ENCODE measurements at regions of chr17 and their contacts with region 1.

Region 1: GRCh38 chr17:50200457-50201275 is 765 bp downstream of the COL1A1 start:
- DNase-seq: peak; percentile 50 to 96 (median 78)

Region 2: DNA sequence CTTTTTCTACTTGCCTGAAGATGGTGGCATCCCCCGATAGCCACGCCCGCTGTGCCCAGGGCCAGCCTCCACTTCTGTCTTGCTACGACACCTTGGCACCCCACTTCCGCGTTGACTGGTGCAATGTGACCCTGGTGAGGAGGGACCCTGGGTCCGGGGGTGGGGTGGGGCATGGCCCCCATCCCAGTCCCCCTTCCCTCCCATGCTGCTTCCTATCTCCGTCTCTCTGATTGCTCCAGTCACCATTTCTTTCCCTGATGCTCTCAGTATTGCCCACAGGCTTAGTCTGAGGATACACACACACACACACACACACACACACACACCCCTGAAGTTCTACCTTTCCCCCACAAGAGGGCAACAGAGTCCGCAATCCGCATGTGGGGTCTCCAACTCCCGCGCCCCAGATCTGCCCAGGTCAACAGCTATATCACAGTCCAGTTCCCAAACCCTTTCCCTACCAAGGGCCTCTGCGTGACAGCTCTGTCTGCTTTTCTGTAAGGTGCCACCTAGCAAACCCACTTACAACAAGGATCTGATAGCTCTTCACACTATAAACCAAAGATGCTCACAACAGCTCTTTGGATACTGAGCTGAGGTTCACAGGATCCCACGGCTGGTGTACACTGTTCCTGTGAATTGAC is 31.4 kb before region 1 on chr17:
- intact Hi-C with region 1: loop called (anchors 2 kb)
- DNase-seq: peak in 2 of 10 donors; percentile 54 to 59

Region 3: DNA sequence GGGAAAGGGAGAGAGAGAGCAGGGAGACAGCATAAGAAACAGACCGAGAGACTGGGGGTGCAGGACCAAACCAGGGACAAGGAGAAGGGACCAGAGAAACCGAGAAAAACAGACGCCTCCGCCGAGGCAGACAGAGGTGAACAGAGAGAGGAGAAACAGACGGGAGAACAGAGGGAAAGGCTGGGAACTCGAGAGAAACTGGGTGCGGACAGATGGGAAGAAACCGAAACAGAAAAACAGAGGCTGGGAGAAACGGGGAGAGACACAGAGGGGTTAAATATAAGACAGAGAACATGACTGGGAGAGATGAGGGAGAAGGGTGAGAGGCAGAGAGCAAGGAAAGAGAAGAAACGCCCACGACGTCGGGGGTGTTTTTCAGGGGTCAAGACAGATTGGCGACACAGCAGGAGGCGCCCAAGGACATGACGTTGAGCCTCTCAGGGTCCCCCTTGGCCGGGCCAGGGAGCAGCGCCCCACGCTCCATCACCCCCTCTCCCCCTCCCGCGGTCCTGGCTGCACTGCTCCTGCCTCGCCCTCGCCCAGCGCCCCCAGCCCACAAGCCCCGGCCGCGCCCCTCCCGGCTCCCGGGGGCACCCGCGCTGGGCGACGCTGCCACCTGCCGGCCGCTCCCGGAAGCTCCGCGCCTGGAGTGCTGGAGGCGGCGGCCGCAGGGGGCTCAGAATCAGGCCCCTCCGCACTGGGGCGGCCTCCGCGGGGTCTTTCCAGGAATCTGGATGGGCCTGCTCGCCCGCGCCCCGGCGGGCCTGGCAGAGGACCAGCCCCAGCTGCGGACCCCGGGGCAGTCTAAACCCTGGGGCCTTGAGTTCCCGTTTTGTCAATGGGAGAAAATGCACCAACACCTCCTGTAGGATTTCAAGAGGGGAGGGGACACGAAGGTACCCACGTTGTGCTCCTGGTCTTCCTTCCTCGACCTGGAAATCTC is 72.3 kb after region 1 on chr17:
- intact Hi-C with region 1: loop called (anchors 1 kb)
- DNase-seq: peak in 8 of 10 donors; percentile 33 to 92 (median 56)

Region 4: DNA sequence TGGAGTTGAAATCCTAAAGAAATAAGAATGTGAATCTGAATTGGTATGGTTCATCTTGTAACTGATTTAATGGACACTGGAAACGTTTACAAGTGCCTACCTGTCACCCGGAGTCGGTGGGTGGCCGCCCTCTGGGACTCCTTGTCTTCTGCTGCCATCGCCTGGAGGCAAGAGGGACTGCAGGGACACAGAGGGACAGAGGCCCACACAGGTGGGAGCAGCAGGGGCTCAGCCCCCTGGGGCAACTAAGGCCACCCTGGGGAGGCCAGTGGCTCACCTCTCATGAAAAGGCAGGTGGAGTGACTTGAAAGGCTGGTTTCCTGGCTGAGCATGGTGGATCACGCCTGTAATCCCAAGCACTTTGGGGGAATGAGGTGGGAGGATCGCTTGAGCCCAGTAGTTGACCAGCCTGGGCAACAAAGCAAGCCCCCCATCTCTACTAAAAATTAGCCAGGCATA is 96.8 kb after region 1 on chr17:
- intact Hi-C with region 1: loop called (anchors 1 kb)
- DNase-seq: peak; percentile 55 to 97 (median 76)